ENCODE measurements at regions of chr7 and their contacts with region 1.

Region 1: GRCh38 chr7:114922016-114922651 is at the start of gene MDFIC:
- DNase-seq: peak; percentile 36 to 51 (median 41)
- H3K4me3 ChIP-seq: peak within 1 kb of the TSS; percentile 84 to 95 (median 85)
- H3K4me3 Mint-ChIP-seq: peak within 1 kb of the TSS; percentile 91 to 96
- H3K27ac ChIP-seq: peak within 1 kb of the TSS; percentile 89 to 94
- H3K27ac Mint-ChIP-seq: peak within 1 kb of the TSS; percentile 79 to 97 (median 91)
- H3K4me1 ChIP-seq: peaks cover 17 to 36% of the 10 kb centered on the region in 2 donors
- H3K4me1 Mint-ChIP-seq: peaks cover 34% of the 10 kb centered on the region
- H3K27me3 ChIP-seq: no peaks in the 10 kb centered on the region
- H3K27me3 Mint-ChIP-seq: peaks cover 0 to 1% (median 0%) of the 10 kb centered on the region in 3 donors
- CTCF ChIP-seq: no peak
- polyA plus RNA-seq, gene MDFIC: 13.0 to 30.0 (median 19.9) TPM

Region 2: DNA sequence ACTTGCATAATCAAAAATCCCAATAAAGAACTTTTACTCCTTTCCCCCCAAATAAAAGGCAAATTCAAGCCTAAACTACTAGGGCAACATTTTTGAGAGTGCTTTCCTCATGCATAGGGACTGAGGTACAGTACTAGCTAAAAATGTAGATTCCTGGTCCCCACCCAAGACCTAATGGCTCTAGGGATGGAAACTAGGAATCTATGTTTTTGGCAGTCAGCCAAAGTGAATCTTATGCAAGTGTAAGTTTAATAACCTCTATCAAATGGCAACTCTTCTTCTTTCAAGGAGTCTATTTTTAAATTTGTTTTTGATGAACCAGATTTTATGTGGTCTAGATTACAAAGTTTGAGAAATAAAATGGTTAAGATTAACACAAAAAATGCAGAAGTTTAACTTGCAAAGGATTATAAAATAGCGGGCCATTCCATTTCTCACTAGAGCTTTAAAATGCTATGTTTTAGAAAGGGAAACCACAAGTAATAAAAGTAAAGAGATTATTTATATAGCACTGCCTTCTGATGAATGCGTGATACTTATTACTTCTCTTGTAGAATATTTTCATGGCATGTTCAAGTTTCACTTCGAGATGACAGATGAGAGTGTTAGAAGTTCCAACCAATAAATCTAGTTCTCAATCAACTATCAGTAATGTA is 70.6 kb before region 1 on chr7:
- intact Hi-C with region 1: no loop called
- DNase-seq: no peak
- H3K4me3 ChIP-seq: no peak overlapping the region
- H3K4me3 Mint-ChIP-seq: no peak overlapping the region
- H3K27ac ChIP-seq: no peak overlapping the region
- H3K27ac Mint-ChIP-seq: no peak overlapping the region
- H3K4me1 ChIP-seq: no peaks in the 10 kb centered on the region
- H3K4me1 Mint-ChIP-seq: no peaks in the 10 kb centered on the region
- H3K27me3 ChIP-seq: no peaks in the 10 kb centered on the region
- H3K27me3 Mint-ChIP-seq: no peaks in the 10 kb centered on the region
- CTCF ChIP-seq: no peak

Region 3: GRCh38 chr7:114959931-114960330 is 37.8 kb after region 1 on chr7:
- intact Hi-C with region 1: loop called in 1 of 2 experiments (anchors 5 kb)
- DNase-seq: no peak
- H3K4me3 ChIP-seq: no peak overlapping the region
- H3K4me3 Mint-ChIP-seq: no peak overlapping the region
- H3K27ac ChIP-seq: no peak overlapping the region
- H3K27ac Mint-ChIP-seq: peak overlapping the region in 1 of 7 donors; percentile 6
- H3K4me1 ChIP-seq: peaks cover 4 to 26% of the 10 kb centered on the region in 2 donors
- H3K4me1 Mint-ChIP-seq: peaks cover 29% of the 10 kb centered on the region
- H3K27me3 ChIP-seq: no peaks in the 10 kb centered on the region
- H3K27me3 Mint-ChIP-seq: no peaks in the 10 kb centered on the region
- CTCF ChIP-seq: no peak

Region 4: GRCh38 chr7:114973147-114973546 is 51.0 kb after region 1 on chr7:
- intact Hi-C with region 1: loop called in 1 of 2 experiments (anchors 5 kb)
- DNase-seq: no peak
- H3K4me3 ChIP-seq: no peak overlapping the region
- H3K4me3 Mint-ChIP-seq: no peak overlapping the region
- H3K27ac ChIP-seq: peak overlapping the region in 1 of 2 donors; percentile 58
- H3K27ac Mint-ChIP-seq: peak overlapping the region in 2 of 7 donors; percentile 30 to 37
- H3K4me1 ChIP-seq: peaks cover 17 to 40% of the 10 kb centered on the region in 2 donors
- H3K4me1 Mint-ChIP-seq: peaks cover 63% of the 10 kb centered on the region
- H3K27me3 ChIP-seq: no peaks in the 10 kb centered on the region
- H3K27me3 Mint-ChIP-seq: no peaks in the 10 kb centered on the region
- CTCF ChIP-seq: no peak

Region 5: DNA sequence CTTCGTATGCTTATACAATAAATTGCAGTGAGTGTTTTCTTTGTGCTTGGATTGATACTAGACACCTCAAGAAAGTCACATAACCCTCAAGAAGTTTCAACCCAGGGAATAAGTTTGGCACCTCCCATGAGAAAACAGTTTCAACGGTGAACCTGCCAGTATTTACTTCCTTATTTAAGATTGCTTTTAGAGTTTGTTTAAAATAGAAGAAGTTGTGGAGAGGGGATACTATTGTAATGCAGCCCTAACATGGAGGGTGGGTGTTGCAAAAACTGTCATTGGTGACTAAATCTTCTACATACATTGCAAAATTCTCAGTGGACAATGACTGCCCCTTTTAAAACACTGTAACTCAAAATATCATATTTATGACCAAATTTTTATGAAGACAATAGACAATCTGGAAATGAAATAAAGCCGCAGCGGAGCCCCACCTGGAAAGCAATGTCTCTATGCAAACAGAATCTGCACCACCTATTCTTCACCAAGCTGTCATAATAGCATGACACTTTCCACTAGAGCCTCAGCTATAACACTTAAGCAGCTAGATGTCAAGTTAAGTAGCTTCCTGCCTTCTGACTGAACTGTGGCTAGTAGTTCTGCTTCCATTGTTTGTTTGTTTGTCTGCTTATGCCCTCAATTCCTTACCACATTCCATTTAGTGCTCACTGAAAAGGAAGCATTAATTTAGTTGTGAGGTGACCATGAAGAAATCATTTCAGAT is 97.9 kb after region 1 on chr7:
- intact Hi-C with region 1: loop called in 1 of 2 experiments (anchors 10 kb)
- DNase-seq: peak; percentile 80 to 88 (median 88)
- H3K4me3 ChIP-seq: peak overlapping the region in 2 of 3 experiments; percentile 16 to 42
- H3K4me3 Mint-ChIP-seq: peak overlapping the region; percentile 2 to 64
- H3K27ac ChIP-seq: peak overlapping the region; percentile 24 to 84
- H3K27ac Mint-ChIP-seq: peak overlapping the region; percentile 87 to 95 (median 93)
- H3K4me1 ChIP-seq: peaks cover 32 to 45% of the 10 kb centered on the region in 2 donors
- H3K4me1 Mint-ChIP-seq: peaks cover 37% of the 10 kb centered on the region
- H3K27me3 ChIP-seq: no peaks in the 10 kb centered on the region
- H3K27me3 Mint-ChIP-seq: peaks cover 0 to 3% (median 0%) of the 10 kb centered on the region in 3 donors
- CTCF ChIP-seq: no peak

Region 6: GRCh38 chr7:116211006-116211912 is 1289.1 kb after region 1 on chr7:
- intact Hi-C with region 1: loop called in 1 of 2 experiments (anchors 10 kb)
- DNase-seq: peak; percentile 86 to 95 (median 92)
- H3K4me3 ChIP-seq: peak overlapping the region; percentile 56 to 92 (median 83)
- H3K4me3 Mint-ChIP-seq: peak overlapping the region; percentile 91 to 92
- H3K27ac ChIP-seq: peak overlapping the region; percentile 96
- H3K27ac Mint-ChIP-seq: peak overlapping the region; percentile 97 to 100 (median 98)
- H3K4me1 ChIP-seq: peaks cover 42 to 53% of the 10 kb centered on the region in 2 donors
- H3K4me1 Mint-ChIP-seq: peaks cover 48% of the 10 kb centered on the region
- H3K27me3 ChIP-seq: no peaks in the 10 kb centered on the region
- H3K27me3 Mint-ChIP-seq: peaks cover 1 to 2% (median 2%) of the 10 kb centered on the region in 3 donors
- CTCF ChIP-seq: no peak

Measured in CD14-positive monocyte (primary cell).